Activated CD4-positive, alpha-beta memory T cell treated with anti-CD3 and anti-CD28 coated beads for 36 hours (primary cell): ENCODE measurements at regions of chr15 and their contacts with region 1.

Region 1: GRCh38 chr15:89358755-89359439 is 24.3 kb upstream of the POLG start:
- DNase-seq: peak; percentile 89
- H3K4me3 Mint-ChIP-seq: peak overlapping the region; percentile 76
- H3K27ac Mint-ChIP-seq: no peak overlapping the region
- H3K4me1 Mint-ChIP-seq: peaks cover 5% of the 10 kb centered on the region
- H3K27me3 Mint-ChIP-seq: peaks cover 72% of the 10 kb centered on the region

Region 2: GRCh38 chr15:89291934-89292438 is 66.9 kb before region 1 on chr15:
- CTCF ChIA-PET with region 1: no interaction called
- POLR2A ChIA-PET with region 1: no interaction called
- intact Hi-C with region 1: no loop called
- DNase-seq: no peak
- H3K4me3 Mint-ChIP-seq: no peak overlapping the region
- H3K27ac Mint-ChIP-seq: no peak overlapping the region
- H3K4me1 Mint-ChIP-seq: no peaks in the 10 kb centered on the region
- H3K27me3 Mint-ChIP-seq: no peaks in the 10 kb centered on the region

Region 3: DNA sequence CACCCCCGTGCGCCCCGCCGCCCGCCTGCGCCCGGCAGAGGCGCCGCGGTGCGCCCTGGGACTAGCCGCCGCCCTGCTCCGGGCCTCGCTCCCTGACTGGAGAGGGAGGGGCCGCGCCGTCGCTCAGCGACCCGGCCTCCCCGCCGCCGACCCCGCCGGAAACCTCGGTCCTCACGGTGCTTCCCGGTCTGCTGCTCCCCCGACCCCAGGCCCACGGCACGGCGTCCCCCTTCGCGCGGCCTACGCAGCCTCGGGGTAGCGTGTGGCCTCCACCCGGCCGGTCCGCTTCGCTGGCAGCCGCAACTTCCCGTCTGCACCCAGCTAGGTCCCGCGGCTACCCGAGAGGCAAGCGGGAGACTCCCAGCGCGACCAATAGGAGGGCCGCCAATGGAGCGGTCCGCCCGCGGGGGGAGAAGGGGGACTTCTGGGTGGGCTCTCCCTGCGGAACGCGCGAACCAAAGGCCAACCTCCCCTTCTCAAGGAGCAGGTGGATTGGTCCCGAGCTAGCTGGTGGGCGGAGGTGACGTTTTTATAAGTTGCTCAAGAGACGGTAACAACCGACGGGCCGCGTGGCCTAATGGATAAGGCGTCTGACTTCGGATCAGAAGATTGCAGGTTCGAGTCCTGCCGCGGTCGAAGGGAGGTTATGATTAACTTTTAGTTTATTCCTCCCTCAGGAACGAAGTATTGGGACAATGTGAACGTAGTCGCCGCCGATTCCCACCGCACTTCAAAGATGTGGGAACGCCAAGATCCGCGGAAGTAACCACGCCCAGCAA is 24.2 kb before region 1 on chr15 and contains the start of gene POLG:
- CTCF ChIA-PET with region 1: interaction called, 58 read pairs
- POLR2A ChIA-PET with region 1: no interaction called
- intact Hi-C with region 1: no loop called
- DNase-seq: peak; percentile 99
- H3K4me3 Mint-ChIP-seq: peak within 1 kb of the TSS; percentile 85
- H3K27ac Mint-ChIP-seq: peak within 1 kb of the TSS; percentile 93
- H3K4me1 Mint-ChIP-seq: peaks cover 50% of the 10 kb centered on the region
- H3K27me3 Mint-ChIP-seq: peaks cover 4% of the 10 kb centered on the region
- total RNA-seq, gene POLG: 94.8 to 97.4 TPM

Region 4: DNA sequence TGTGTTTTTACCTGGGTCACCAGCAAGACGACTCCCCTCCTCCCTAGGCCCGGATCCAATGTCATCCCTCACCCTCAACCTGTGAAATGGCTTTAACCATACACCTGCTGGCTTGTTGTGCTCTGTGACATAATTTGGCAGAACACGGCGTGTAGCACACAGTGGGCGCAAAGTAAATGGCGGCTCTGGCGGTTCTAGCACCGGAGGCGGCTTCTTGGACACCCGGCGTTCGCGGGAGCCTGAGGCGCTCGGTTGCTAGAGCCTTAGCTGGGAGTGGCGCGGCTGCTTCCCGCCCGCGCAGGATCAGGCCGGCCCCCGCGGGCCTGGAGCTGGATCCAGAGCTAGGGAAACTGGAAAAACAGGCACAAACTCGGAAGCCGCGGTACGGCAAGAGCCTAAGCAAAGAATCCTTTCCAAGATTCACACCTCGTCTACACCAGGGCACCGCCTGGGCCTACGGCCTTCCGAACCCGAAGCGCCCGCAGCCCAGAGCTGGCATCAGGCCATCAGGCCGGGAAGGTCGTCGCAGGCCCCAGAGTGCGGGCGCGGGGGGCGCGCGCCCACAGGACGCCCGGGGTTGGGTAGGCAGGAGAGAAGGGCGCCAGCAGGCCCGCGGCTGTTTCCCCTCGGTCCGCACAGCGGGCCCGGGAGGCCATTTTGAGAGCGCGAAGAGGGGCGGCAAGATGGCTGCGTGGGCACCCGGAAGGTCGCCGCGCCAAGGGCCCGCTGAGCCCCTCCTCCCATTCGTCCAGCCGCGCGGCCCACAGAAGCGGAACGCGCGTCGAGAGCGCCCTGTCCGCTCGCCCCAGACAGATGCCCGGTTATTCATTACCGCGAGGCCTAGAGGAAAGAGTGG is 19.6 kb after region 1 on chr15:
- CTCF ChIA-PET with region 1: interaction called, 57 read pairs
- POLR2A ChIA-PET with region 1: no interaction called
- intact Hi-C with region 1: no loop called
- DNase-seq: no peak
- H3K4me3 Mint-ChIP-seq: peak overlapping the region; percentile 64
- H3K27ac Mint-ChIP-seq: peak overlapping the region; percentile 59
- H3K4me1 Mint-ChIP-seq: peaks cover 4% of the 10 kb centered on the region
- H3K27me3 Mint-ChIP-seq: peaks cover 74% of the 10 kb centered on the region

Region 5: DNA sequence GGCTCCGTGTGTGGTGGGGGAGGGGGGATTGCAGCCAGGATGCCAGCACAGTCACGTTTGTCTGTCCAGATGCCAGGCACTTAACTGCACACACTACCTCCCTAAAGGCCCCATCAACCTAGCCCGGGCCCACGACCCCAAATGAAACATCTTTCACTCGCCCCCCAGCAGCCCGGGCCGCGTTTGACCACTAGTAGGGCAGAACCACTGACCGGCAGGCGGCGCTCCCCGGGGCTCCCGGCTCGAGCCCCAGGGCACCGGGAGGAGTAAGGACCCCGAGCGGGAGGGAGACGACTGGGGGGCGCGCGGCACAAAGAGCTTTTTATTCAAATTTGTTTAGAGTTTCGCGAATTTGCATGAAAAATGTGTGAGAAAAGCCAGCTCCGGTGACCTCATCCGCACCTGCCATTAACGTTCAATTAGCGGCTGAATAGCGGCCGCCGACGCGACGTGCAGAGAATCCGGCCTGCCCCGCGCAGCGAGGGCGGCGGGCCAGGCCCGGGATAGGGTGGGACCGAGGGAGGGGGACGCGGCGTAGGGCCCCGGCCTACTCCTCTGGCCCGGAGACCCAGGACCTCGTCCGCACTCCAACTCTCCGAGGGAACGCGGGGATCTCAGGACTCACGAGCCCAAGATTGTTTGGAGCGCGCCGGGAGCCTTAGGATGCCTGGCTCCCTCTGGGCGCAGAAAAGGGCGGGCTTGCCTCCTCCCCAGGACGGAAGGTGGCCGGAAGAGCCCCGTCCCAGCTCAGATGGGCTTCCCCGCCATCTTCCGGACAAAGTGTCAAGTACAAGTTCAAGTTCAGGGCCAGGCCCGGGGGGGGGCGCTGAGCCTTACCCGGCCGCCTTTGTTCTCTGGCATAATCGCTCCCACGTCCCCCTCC is 40.6 kb after region 1 on chr15:
- CTCF ChIA-PET with region 1: interaction called, 71 read pairs
- POLR2A ChIA-PET with region 1: no interaction called
- intact Hi-C with region 1: loop called (anchors 2 kb)
- DNase-seq: peak; percentile 55
- H3K4me3 Mint-ChIP-seq: peak overlapping the region; percentile 73
- H3K27ac Mint-ChIP-seq: no peak overlapping the region
- H3K4me1 Mint-ChIP-seq: peaks cover 7% of the 10 kb centered on the region
- H3K27me3 Mint-ChIP-seq: peaks cover 56% of the 10 kb centered on the region

Region 6: GRCh38 chr15:89416141-89416853 is 57.4 kb after region 1 on chr15:
- CTCF ChIA-PET with region 1: interaction called, 130 read pairs
- POLR2A ChIA-PET with region 1: no interaction called
- intact Hi-C with region 1: loop called (anchors 1 kb)
- DNase-seq: peak; percentile 90
- H3K4me3 Mint-ChIP-seq: no peak overlapping the region
- H3K27ac Mint-ChIP-seq: no peak overlapping the region
- H3K4me1 Mint-ChIP-seq: peaks cover 10% of the 10 kb centered on the region
- H3K27me3 Mint-ChIP-seq: peaks cover 88% of the 10 kb centered on the region

Region 7: DNA sequence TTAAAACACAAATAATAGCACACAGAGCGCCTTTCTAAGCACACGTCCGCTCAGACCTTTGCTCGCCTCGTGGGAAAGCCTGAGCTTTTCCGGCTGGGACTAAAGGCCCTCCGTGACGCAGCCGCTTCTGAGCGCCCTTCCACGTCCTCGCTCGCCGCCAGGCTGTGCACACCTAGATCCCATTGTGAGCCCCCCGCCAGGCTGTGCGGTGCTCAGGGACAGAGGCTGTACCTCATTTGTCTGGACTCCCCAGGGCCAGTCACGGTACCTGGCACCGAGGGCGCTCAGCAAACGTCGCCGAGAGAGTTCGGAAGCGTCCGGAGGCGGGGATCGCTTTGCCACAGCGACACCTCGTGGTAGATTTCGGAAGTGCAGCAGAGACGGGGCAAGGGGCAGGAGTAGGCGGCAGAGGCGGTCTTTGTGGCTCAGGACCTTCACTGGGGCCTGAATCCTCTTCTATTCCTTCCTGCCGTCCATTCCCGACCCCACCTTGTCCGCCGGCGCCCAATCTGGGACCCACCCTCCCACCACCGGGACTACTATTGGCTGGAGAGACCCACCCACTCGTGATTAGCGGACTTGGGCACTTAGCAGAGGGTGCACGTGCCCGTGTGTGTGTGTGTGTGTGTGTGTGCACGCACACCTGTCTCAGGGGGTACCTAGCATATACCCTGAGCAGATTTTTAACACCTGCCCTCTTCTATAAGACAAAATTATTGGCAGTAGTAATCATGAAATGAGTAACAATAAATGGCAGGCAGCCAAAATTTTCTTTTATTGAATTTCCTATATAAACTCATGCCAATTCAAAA is 71.8 kb after region 1 on chr15:
- CTCF ChIA-PET with region 1: interaction called, 185 read pairs
- POLR2A ChIA-PET with region 1: no interaction called
- intact Hi-C with region 1: loop called (anchors 1 kb)
- DNase-seq: peak; percentile 92
- H3K4me3 Mint-ChIP-seq: peak overlapping the region; percentile 69
- H3K27ac Mint-ChIP-seq: no peak overlapping the region
- H3K4me1 Mint-ChIP-seq: peaks cover 6% of the 10 kb centered on the region
- H3K27me3 Mint-ChIP-seq: peaks cover 19% of the 10 kb centered on the region

Region 8: GRCh38 chr15:89442671-89443307 is 83.9 kb after region 1 on chr15:
- CTCF ChIA-PET with region 1: interaction called, 30 read pairs
- POLR2A ChIA-PET with region 1: no interaction called
- intact Hi-C with region 1: no loop called
- DNase-seq: peak; percentile 68
- H3K4me3 Mint-ChIP-seq: no peak overlapping the region
- H3K27ac Mint-ChIP-seq: no peak overlapping the region
- H3K4me1 Mint-ChIP-seq: no peaks in the 10 kb centered on the region
- H3K27me3 Mint-ChIP-seq: peaks cover 30% of the 10 kb centered on the region